ENCODE measurements at regions of chr2 and their contacts with region 1.

Region 1: GRCh38 chr2:199488772-199489400 is 31.1 kb upstream of the SATB2 start:
- DNase-seq: peak in 3 of 5 donors; percentile 42 to 48 (median 46)
- H3K4me3 ChIP-seq: no peak overlapping the region
- H3K4me3 Mint-ChIP-seq: no peak overlapping the region
- H3K27ac ChIP-seq: no peak overlapping the region
- H3K27ac Mint-ChIP-seq: no peak overlapping the region
- H3K4me1 ChIP-seq: no peaks in the 10 kb centered on the region
- H3K4me1 Mint-ChIP-seq: peaks cover 0 to 1% (median 0%) of the 10 kb centered on the region in 4 donors
- H3K27me3 ChIP-seq: no peaks in the 10 kb centered on the region
- H3K27me3 Mint-ChIP-seq: peaks cover 17% of the 10 kb centered on the region in 2 donors

Region 2: DNA sequence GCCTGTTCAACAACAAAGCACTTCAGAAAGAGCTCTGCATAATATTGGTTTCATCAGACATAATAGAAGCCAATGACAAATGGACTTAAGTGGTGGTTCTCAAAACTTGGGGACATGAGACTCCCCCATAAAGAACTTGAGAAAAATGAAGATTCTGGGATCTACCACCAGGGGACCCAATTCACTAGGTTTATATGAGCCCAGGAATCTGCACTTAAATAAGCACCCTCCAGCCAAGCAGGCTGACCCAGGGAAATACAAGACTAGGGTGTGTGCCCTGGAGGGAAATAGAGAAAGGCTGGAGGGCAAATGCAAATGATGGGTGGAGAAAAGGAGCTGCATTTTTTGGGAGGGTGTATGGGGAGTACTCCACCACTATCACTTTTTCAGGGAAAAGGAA is 83.6 kb before region 1 on chr2:
- CTCF ChIA-PET with region 1: no interaction called
- POLR2A ChIA-PET with region 1: no interaction called
- intact Hi-C with region 1: no loop called
- DNase-seq: no peak
- H3K4me3 ChIP-seq: no peak overlapping the region
- H3K4me3 Mint-ChIP-seq: no peak overlapping the region
- H3K27ac ChIP-seq: no peak overlapping the region
- H3K27ac Mint-ChIP-seq: no peak overlapping the region
- H3K4me1 ChIP-seq: no peaks in the 10 kb centered on the region
- H3K4me1 Mint-ChIP-seq: no peaks in the 10 kb centered on the region
- H3K27me3 ChIP-seq: no peaks in the 10 kb centered on the region
- H3K27me3 Mint-ChIP-seq: peaks cover 0 to 3% of the 10 kb centered on the region in 2 donors

Region 3: DNA sequence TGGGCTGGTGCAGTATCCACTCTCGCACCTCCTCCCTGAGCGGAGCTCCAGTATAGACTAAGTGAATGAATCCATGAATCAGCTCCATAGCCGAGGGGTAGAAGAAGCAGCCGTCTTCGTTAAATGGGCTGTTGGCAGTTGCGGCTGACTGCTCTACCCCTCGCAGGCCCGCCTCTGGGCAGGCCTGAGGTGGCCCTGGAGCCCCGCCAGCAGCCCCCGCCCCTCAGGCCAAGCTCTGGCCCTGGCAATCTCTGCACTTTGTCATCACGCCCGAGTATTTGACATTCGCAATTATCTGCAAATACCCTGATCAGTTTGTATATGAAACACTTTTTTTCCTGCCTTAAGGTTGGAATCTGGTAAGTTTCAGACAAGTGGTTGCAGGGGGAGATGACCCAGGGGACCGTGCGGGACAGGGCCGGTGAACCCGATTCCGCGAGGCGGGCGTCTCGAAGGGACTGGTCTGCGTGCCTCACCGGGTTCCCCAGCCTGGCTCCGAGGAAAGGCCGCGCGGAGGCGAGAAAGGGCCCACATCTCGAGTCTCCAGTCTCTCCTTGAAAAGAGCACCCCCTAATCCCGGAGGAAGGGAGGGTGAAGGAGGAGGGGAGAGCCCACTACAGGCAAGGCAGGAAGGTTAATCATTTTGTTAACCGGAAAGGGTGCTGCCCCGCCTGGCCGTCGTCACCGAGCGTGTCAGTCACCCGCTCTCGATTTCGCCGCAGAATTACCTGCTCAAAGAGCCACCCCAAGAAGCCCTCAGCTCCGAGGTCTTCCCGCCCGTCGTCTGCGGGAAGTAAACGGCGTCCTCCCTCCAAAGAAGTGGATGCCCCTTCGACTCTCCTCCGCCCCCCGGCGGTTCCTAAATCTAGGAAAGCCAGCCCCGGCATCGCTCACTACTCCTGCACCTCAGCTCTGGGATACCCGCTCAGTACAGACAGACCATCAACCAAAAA is 20.0 kb before region 1 on chr2:
- CTCF ChIA-PET with region 1: interaction called, 10 read pairs
- POLR2A ChIA-PET with region 1: no interaction called
- intact Hi-C with region 1: no loop called
- DNase-seq: peak in 1 of 5 donors; percentile 19
- H3K4me3 ChIP-seq: no peak overlapping the region
- H3K4me3 Mint-ChIP-seq: peak overlapping the region in 7 of 8 donors; percentile 13 to 82 (median 46)
- H3K27ac ChIP-seq: no peak overlapping the region
- H3K27ac Mint-ChIP-seq: no peak overlapping the region
- H3K4me1 ChIP-seq: peaks cover 22% of the 10 kb centered on the region
- H3K4me1 Mint-ChIP-seq: peaks cover 8 to 32% (median 18%) of the 10 kb centered on the region in 4 donors
- H3K27me3 ChIP-seq: peaks cover 82% of the 10 kb centered on the region
- H3K27me3 Mint-ChIP-seq: peaks cover 73 to 76% of the 10 kb centered on the region in 2 donors

Region 4: DNA sequence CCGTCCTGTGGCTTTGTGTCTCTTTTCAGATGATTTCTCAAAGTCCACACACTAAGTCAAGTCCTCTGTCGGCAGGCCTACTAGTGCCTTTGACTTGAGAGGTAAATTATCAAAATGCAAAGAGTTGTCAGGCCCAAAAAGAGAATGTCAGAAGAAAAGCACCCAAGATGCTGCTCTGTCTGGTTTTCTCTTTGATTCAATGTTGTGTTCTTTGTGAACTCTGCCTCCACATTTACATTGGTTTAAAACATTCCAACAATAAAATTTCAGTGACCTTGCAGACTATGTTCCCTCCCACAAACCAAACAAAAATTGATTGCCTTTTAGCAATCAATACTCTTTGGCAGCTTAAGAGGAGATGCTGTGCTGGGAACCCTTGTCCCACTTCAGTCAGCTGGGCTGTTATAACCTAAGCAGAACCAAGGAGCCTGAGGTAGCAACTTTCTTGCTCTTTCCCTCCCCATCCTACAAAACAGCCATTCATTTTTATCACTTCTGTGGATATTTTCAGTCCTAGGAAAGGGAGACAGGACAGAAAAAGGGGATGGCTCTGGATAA is 11.5 kb before region 1 on chr2:
- CTCF ChIA-PET with region 1: interaction called, 18 read pairs
- POLR2A ChIA-PET with region 1: no interaction called
- intact Hi-C with region 1: no loop called
- DNase-seq: no peak
- H3K4me3 ChIP-seq: no peak overlapping the region
- H3K4me3 Mint-ChIP-seq: no peak overlapping the region
- H3K27ac ChIP-seq: no peak overlapping the region
- H3K27ac Mint-ChIP-seq: no peak overlapping the region
- H3K4me1 ChIP-seq: no peaks in the 10 kb centered on the region
- H3K4me1 Mint-ChIP-seq: no peaks in the 10 kb centered on the region
- H3K27me3 ChIP-seq: peaks cover 11% of the 10 kb centered on the region
- H3K27me3 Mint-ChIP-seq: peaks cover 30 to 32% of the 10 kb centered on the region in 2 donors

Region 5: DNA sequence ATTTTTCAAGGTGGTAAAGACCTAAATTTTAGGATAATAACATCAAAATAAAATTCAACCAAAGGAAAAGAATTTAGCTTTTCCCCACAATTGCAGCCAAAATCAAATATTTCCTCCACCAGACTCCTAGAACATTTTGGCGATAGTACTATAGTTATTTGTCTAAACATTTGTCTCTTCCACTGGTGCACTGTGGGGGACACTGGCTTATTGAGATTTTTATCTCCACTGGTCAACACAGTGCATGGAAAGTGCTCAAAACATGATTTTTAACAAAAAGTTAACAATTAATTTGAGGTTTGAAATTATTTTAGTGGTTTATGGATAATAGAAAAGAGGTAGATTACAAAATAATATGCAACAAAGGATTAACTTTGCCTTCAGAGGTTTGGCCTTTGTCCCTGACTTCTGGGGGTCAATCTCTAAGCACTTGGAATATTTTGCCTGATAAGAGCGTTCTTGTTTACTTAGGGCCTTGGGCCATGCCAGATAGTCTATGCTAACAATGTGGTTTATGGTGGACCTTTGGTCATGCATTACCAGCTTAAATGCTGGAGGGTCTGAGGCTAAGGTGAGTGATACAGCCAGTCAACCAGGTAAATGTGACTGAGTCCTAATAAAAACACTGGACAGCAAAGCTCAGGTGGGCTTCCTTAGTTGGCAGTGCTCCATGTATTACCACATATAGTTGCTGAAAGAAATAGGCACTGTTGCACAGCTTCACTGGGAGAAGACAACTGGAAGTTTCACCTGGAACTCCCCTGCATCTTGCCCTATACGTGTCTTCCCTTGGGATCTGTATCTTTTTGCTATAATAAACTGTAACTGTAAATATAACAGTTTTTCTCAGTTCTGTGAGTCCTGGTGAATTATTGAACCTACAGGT is 36.0 kb after region 1 on chr2:
- CTCF ChIA-PET with region 1: no interaction called
- POLR2A ChIA-PET with region 1: no interaction called
- intact Hi-C with region 1: no loop called
- DNase-seq: no peak
- H3K4me3 ChIP-seq: no peak overlapping the region
- H3K4me3 Mint-ChIP-seq: no peak overlapping the region
- H3K27ac ChIP-seq: no peak overlapping the region
- H3K27ac Mint-ChIP-seq: no peak overlapping the region
- H3K4me1 ChIP-seq: no peaks in the 10 kb centered on the region
- H3K4me1 Mint-ChIP-seq: no peaks in the 10 kb centered on the region
- H3K27me3 ChIP-seq: no peaks in the 10 kb centered on the region
- H3K27me3 Mint-ChIP-seq: peaks cover 7 to 8% of the 10 kb centered on the region in 2 donors

Region 6: DNA sequence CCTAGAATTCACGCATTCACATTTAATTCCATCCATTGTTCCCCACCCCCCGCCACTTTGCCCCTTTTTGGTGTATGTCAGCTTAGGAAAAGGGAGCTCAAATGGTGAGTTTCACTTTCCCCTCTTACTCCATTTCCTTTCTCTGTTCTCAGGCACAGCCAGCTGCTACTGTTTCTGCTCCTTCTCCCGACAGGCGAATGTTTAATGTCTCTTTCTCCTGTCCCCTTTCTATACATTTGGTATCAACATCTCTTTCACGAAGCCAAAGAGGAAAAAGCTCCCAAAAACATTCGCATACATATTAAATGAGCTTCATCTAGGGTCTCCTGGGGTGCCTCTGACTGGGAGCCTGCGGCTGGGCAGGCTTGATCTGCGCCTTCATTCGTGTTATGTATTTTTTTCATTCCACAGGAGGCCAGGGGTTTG is 93.1 kb after region 1 on chr2:
- CTCF ChIA-PET with region 1: no interaction called
- POLR2A ChIA-PET with region 1: no interaction called
- intact Hi-C with region 1: no loop called
- DNase-seq: no peak
- H3K4me3 ChIP-seq: no peak overlapping the region
- H3K4me3 Mint-ChIP-seq: no peak overlapping the region
- H3K27ac ChIP-seq: no peak overlapping the region
- H3K27ac Mint-ChIP-seq: no peak overlapping the region
- H3K4me1 ChIP-seq: no peaks in the 10 kb centered on the region
- H3K4me1 Mint-ChIP-seq: no peaks in the 10 kb centered on the region
- H3K27me3 ChIP-seq: no peaks in the 10 kb centered on the region
- H3K27me3 Mint-ChIP-seq: peaks cover 7 to 8% of the 10 kb centered on the region in 2 donors

Measured in CD4-positive, alpha-beta memory T cell (primary cell).